Caco-2 (cell line): ENCODE measurements at regions of chr11 and their contacts with region 1.

Region 1: DNA sequence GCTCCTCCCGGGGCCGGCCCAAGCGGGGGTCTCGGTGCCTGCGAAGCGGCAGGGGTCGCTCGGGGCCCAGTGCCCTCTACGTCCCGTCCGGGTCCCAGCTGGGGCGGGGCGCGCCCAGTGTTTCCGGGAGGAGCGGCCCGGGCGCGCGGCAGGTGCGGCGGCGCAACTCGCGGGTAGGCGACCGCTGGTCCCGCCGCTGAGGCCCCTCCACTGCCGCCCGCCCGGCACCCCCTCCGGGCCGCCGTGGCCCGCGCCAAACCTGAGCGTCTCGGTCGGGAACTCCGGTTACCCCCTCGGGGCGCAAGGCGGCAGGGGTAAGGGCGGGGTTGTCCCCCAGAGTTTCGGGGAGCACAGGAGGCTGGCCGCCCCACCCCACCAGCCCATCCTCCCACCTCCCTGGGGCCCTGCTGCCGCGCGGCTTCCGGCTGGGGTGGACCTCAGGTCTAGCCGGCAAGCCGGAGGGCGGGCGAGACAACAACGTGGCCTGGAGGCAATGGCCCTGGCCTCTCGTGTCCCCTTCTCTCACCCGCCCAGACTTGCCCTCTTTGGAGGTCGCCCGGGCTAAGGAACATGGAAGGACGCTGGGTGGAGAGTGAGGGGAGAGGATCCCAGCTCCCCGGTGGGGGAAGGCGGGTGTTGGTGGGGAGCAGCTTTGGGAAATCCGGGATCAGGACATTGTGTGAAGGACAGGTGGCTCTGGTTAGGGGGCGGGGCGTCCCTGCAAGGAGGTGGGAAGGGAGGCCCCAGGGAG is 398 bp upstream of the CRACR2B start:
- DNase-seq: peak; percentile 79 to 80
- H3K4me3 ChIP-seq: peak overlapping the region; percentile 62
- H3K4me3 Mint-ChIP-seq: peak overlapping the region; percentile 88
- H3K27ac Mint-ChIP-seq: peak overlapping the region; percentile 63
- H3K4me1 ChIP-seq: peaks cover 45% of the 10 kb centered on the region
- H3K4me1 Mint-ChIP-seq: peaks cover 18% of the 10 kb centered on the region
- H3K27me3 ChIP-seq: no peaks in the 10 kb centered on the region
- H3K27me3 Mint-ChIP-seq: no peaks in the 10 kb centered on the region
- CTCF ChIP-seq: peak in 1 of 2 experiments; percentile 1

Region 2: GRCh38 chr11:842370-843002 is 15.2 kb after region 1 on chr11 and contains the starts of genes POLR2L and TSPAN4:
- CTCF ChIA-PET with region 1: interaction called, 4 read pairs
- POLR2A ChIA-PET with region 1: interaction called, 12 read pairs
- intact Hi-C with region 1: no loop called
- DNase-seq: peak; percentile 90 to 94
- H3K4me3 ChIP-seq: peak within 1 kb of the TSS; percentile 68
- H3K4me3 Mint-ChIP-seq: peak within 1 kb of the TSS; percentile 90
- H3K27ac Mint-ChIP-seq: peak within 1 kb of the TSS; percentile 88
- H3K4me1 ChIP-seq: peaks cover 26% of the 10 kb centered on the region
- H3K4me1 Mint-ChIP-seq: peaks cover 18% of the 10 kb centered on the region
- H3K27me3 ChIP-seq: no peaks in the 10 kb centered on the region
- H3K27me3 Mint-ChIP-seq: no peaks in the 10 kb centered on the region
- CTCF ChIP-seq: no peak
- total RNA-seq, gene POLR2L: 139 and 141 TPM in 2 replicates
- total RNA-seq, gene TSPAN4: 84.5 and 95.9 TPM in 2 replicates

Region 3: DNA sequence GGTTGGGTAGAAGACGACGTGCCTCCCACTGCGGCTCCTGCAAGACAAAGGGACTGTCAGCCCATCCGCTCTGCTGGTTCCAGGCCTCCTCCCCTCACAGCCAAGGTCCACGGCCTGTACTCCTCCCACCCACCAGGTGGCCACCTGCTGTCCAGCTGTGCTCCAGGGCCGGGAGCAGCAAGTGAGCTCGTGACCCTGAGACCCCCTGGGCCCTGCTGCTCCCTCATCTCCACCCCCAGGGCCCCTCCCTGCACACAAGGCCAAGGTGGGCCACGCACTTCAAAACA is 42.7 kb after region 1 on chr11:
- CTCF ChIA-PET with region 1: no interaction called
- POLR2A ChIA-PET with region 1: no interaction called
- intact Hi-C with region 1: no loop called
- DNase-seq: peak in 1 of 2 experiments; percentile 61
- H3K4me3 ChIP-seq: no peak overlapping the region
- H3K4me3 Mint-ChIP-seq: no peak overlapping the region
- H3K27ac Mint-ChIP-seq: no peak overlapping the region
- H3K4me1 ChIP-seq: no peaks in the 10 kb centered on the region
- H3K4me1 Mint-ChIP-seq: no peaks in the 10 kb centered on the region
- H3K27me3 ChIP-seq: no peaks in the 10 kb centered on the region
- H3K27me3 Mint-ChIP-seq: no peaks in the 10 kb centered on the region
- CTCF ChIP-seq: peak; percentile 40 to 71